Mammary epithelial cell (primary cell): ENCODE measurements at regions of chr11 and their contacts with region 1.

Region 1: GRCh38 chr11:82867495-82868082 is 32.6 kb downstream of the PRCP start:
- DNase-seq: peak; percentile 44
- H3K4me3 ChIP-seq: peak overlapping the region in 1 of 3 experiments; percentile 30
- H3K27ac ChIP-seq: no peak overlapping the region
- H3K4me1 ChIP-seq: peaks cover 14% of the 10 kb centered on the region
- H3K27me3 ChIP-seq: no peaks in the 10 kb centered on the region
- CTCF ChIP-seq: peak; percentile 51 to 60

Region 2: DNA sequence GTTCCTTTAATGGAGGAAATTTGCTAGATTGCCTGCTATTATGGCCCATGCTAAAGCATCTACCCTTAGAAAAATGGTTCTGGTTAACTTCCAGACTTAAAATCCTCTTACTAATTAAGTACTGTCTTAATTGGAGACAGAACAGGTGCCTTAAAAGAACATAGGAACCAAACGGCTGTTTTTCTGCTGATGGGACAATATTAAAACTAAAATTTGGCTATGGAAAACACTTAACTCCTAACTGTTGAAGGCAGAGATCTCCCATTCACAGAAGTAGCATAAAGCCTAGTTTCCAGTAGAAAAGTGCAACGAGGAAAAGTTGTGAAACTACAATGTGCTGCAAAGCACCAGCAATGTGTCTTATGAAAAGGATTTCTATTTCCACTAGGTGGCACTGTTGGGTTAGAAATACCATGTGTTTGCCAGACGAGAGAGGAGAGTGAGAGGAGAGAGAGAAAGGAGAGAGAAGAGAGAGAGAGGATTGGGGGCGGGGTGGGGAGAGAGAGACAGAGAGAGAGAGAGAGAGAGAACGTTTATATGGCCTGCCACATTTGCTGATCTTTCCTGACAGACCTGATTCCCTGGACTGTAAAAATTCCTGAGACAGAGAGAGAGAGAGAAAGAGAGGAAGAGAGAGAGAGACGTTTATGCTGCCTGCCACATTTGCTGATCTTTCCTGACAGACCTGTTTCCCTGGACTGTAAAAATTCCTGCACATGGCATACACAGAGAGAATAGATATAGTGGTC is 185.4 kb before region 1 on chr11:
- CTCF ChIA-PET with region 1: no interaction called
- dilution Hi-C with region 1: no loop called
- in situ Hi-C with region 1: no loop called
- intact Hi-C with region 1: loop called (anchors 1 kb)
- DNase-seq: peak; percentile 62
- H3K4me3 ChIP-seq: no peak overlapping the region
- H3K27ac ChIP-seq: no peak overlapping the region
- H3K4me1 ChIP-seq: no peaks in the 10 kb centered on the region
- H3K27me3 ChIP-seq: peaks cover 7% of the 10 kb centered on the region
- CTCF ChIP-seq: peak; percentile 44 to 66

Region 3: GRCh38 chr11:82718307-82718706 is 149.3 kb before region 1 on chr11:
- CTCF ChIA-PET with region 1: interaction called, 7 read pairs
- dilution Hi-C with region 1: loop called (anchors 5 kb)
- in situ Hi-C with region 1: loop called in 1 of 2 experiments (anchors 5 kb)
- intact Hi-C with region 1: loop called (anchors 1 kb)
- DNase-seq: peak; percentile 54
- H3K4me3 ChIP-seq: no peak overlapping the region
- H3K27ac ChIP-seq: no peak overlapping the region
- H3K4me1 ChIP-seq: peaks cover 4% of the 10 kb centered on the region
- H3K27me3 ChIP-seq: no peaks in the 10 kb centered on the region
- CTCF ChIP-seq: peak; percentile 76 to 80

Region 4: GRCh38 chr11:82733444-82734119 is 134.0 kb before region 1 on chr11 and contains the start of gene FAM181B:
- CTCF ChIA-PET with region 1: interaction called, 4 read pairs
- dilution Hi-C with region 1: no loop called
- in situ Hi-C with region 1: loop called in 1 of 2 experiments (anchors 5 kb)
- intact Hi-C with region 1: no loop called
- DNase-seq: peak; percentile 32
- H3K4me3 ChIP-seq: peak within 1 kb of the TSS; percentile 54 to 68 (median 60)
- H3K27ac ChIP-seq: no peak within 1 kb of the TSS
- H3K4me1 ChIP-seq: peaks cover 11% of the 10 kb centered on the region
- H3K27me3 ChIP-seq: peaks cover 14% of the 10 kb centered on the region
- CTCF ChIP-seq: no peak
- total RNA-seq, gene FAM181B: 0.21 to 1.0 TPM

Region 5: GRCh38 chr11:82775736-82776346 is 91.7 kb before region 1 on chr11:
- CTCF ChIA-PET with region 1: interaction called, 8 read pairs
- dilution Hi-C with region 1: no loop called
- in situ Hi-C with region 1: no loop called
- intact Hi-C with region 1: loop called (anchors 1 kb)
- DNase-seq: peak; percentile 51
- H3K4me3 ChIP-seq: no peak overlapping the region
- H3K27ac ChIP-seq: no peak overlapping the region
- H3K4me1 ChIP-seq: peaks cover 15% of the 10 kb centered on the region
- H3K27me3 ChIP-seq: no peaks in the 10 kb centered on the region
- CTCF ChIP-seq: peak; percentile 79

Region 6: DNA sequence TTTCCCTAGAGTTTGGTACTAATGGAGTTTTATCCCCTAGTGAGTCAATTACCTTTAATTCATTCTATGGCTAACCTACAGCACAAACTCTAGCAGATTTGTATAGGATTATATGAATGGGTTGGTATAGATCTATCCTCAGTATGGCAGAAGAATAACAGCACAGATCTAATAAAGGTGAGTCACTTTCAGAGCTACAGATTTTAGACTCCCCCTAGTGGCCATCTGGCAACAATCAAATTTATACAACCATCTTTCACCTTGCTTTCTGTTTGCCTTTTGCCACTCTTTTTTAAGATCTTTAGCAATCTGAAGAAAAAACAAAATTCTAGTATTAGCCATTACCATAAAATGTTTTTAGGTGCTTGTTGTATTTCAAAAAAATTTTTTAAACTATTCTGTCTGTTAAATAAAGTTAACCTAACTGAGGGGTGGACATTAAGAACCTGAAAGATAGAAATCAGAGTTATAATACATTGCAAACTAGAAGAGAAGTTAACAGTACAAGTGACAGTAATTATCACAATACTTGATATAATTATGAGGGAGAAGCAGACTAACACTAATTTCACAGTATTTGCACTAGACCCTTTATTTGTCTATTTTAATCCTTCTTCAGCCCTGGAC is 59.8 kb after region 1 on chr11:
- CTCF ChIA-PET with region 1: no interaction called
- dilution Hi-C with region 1: no loop called
- in situ Hi-C with region 1: no loop called
- intact Hi-C with region 1: loop called (anchors 1 kb)
- DNase-seq: peak; percentile 45
- H3K4me3 ChIP-seq: no peak overlapping the region
- H3K27ac ChIP-seq: no peak overlapping the region
- H3K4me1 ChIP-seq: no peaks in the 10 kb centered on the region
- H3K27me3 ChIP-seq: no peaks in the 10 kb centered on the region
- CTCF ChIP-seq: peak; percentile 82 to 83

Region 7: DNA sequence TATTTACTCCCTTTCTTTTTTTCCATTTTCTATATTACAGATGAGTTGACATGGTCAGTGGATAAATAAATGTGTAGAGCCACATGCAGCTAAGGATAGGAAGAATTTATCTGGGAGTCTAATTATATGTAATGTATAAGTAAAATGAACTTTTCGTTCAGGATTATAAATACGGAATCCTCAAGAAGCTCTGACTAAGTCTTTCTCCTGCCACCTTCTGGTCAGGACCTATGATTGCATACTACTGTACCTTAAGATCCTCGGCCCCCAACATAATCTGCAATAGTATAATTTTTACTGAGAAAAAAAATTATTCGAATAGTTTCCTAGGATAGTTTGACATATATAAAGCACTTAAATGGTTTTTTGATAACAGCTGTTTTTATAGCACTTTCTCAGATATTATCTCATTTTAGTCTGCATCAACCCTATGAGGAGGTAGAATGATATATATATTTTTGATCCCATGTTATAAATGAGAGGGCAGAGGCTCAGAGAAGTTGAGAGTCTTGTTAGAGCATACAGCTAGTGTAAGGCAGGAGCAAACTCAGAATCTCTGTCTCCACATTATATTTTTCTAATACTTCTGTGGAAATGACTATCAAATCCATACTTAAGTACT is 382.5 kb after region 1 on chr11:
- CTCF ChIA-PET with region 1: no interaction called
- dilution Hi-C with region 1: no loop called
- in situ Hi-C with region 1: no loop called
- intact Hi-C with region 1: loop called (anchors 1 kb)
- DNase-seq: peak; percentile 20
- H3K4me3 ChIP-seq: no peak overlapping the region
- H3K27ac ChIP-seq: no peak overlapping the region
- H3K4me1 ChIP-seq: no peaks in the 10 kb centered on the region
- H3K27me3 ChIP-seq: no peaks in the 10 kb centered on the region
- CTCF ChIP-seq: peak; percentile 62 to 69